ENCODE measurements at regions of chr13 and their contacts with region 1.

Region 1: GRCh38 chr13:51435002-51435578 is 17.7 kb downstream of the INTS6 start:
- DNase-seq: no peak
- H3K4me3 ChIP-seq: no peak overlapping the region
- H3K27ac ChIP-seq: no peak overlapping the region
- H3K4me1 ChIP-seq: no peaks in the 10 kb centered on the region
- H3K27me3 ChIP-seq: no peaks in the 10 kb centered on the region
- CTCF ChIP-seq: peak in 2 of 3 donors; percentile 15
- EP300 ChIP-seq: no peak
- POLR2A ChIP-seq: no peak

Region 2: DNA sequence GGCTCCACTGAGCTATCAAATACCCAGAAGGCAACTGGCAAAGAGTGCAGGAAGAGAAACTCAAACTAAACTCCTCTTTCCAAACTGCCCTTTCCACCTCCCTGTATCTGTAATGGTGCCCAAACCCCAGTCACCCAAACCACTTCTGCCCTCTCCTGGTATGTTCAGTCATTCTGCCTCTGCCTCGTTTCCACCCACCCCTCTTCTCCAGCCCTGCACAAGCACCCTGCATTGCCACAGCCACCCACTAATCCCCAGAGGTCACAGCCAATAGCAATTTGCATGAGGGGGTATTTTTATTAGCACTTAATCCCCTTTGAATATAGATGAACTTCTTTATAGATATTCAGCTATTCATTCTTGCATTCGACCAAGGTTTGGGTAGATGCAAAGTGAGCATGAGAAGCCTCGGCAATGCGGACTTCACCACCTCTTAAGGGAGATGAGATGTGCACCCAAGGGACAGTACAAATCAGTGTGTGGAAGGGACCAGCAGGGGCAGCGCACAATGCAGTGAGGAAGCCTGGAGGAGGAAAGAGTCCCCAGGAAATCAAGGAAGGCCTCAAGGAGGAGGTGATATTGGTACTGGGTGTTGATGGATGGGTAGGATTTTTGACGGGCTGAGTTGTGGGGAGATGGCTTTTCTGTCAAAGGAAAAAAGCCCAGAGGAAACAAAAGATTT is 397.5 kb after region 1 on chr13:
- intact Hi-C with region 1: loop called in 2 of 4 experiments (anchors 10 kb)
- DNase-seq: no peak
- H3K4me3 ChIP-seq: no peak overlapping the region
- H3K27ac ChIP-seq: no peak overlapping the region
- H3K4me1 ChIP-seq: no peaks in the 10 kb centered on the region
- H3K27me3 ChIP-seq: no peaks in the 10 kb centered on the region
- CTCF ChIP-seq: peak in 2 of 3 donors; percentile 9 to 12
- EP300 ChIP-seq: no peak
- POLR2A ChIP-seq: no peak

Measured in ovary (tissue), 10 donors.